AG04449 (cell line): ENCODE measurements at regions of chr19 and their contacts with region 1.

Region 1: GRCh38 chr19:6862673-6863078 is 24.7 kb upstream of the ADGRE1 start:
- DNase-seq: peak; percentile 9
- H3K4me3 ChIP-seq: peak overlapping the region; percentile 40
- CTCF ChIP-seq: peak; percentile 86

Region 2: GRCh38 chr19:6516659-6517291 is 345.9 kb before region 1 on chr19:
- CTCF ChIA-PET with region 1: interaction called, 24 read pairs
- POLR2A ChIA-PET with region 1: no interaction called
- DNase-seq: peak; percentile 3
- H3K4me3 ChIP-seq: peak overlapping the region; percentile 73
- CTCF ChIP-seq: peak; percentile 98

Region 3: DNA sequence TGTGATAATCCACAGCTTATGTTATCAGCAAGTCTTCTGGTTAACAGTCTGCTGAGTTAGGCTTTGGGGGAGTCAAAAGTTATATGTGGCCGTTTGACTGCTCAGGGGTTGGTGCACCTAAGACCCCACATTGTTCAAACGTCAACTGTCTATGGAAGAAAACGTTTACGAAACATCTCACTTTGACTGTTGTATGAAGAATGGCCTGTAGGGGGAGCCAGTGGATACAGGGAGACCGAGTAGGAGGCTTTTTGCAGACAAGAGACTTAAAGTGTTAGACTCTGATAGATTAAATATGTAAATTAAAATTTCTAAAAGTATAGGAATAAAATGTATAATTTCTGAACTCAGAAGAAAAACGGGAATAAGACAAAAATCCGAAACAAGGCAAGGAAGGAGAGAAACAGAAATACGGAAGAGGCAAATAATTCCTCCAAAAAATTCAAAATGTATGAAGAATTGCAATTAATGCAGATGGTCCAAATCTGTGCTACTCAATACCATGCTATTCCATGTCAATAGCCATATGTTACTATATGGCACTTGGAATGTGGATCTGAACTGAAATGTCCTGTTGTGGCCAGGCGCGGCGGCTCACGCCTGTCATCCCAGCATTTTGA is 230.6 kb before region 1 on chr19:
- CTCF ChIA-PET with region 1: interaction called, 10 read pairs
- POLR2A ChIA-PET with region 1: no interaction called
- DNase-seq: no peak
- H3K4me3 ChIP-seq: no peak overlapping the region
- CTCF ChIP-seq: peak; percentile 77

Region 4: DNA sequence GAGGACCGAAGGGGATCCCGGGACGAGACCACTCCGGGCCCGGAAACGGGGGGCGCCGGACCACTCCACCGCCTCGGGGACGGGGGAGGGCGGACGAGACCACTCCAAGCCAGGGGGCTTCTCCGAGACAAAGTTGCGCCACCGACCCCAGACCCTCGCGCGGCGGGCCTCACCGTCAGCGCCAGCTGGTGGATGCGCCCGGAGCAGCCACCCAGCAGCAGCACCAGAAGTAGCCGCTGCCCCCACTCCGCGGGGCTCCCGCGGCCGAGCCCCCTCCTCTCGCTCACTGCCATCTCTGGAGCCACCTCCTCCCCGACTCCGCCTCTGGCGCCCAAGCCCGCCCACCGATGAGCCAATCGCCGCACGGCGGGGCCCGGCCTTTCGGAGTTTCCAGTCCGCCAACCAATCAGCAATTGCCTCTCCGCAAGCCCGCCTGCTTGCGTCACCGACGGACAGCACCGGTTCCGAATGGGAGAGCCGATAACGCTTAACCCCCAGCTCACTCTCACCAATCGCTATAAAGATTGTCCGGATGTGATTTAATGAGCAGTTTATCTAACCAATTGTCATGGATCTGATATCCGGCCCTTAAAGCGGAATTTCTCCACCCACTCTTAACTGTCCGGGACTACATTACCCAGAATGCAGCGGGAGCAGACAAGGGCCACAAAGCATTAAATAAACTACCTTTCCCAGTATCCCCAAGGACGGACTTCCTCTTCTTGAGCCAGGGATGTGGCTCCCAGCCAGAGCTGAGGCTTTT is 125.2 kb before region 1 on chr19 and contains the start of gene GPR108:
- CTCF ChIA-PET with region 1: interaction called, 131 read pairs
- POLR2A ChIA-PET with region 1: interaction called, 11 read pairs
- DNase-seq: peak; percentile 100
- H3K4me3 ChIP-seq: peak within 1 kb of the TSS; percentile 76
- CTCF ChIP-seq: no peak

Region 5: DNA sequence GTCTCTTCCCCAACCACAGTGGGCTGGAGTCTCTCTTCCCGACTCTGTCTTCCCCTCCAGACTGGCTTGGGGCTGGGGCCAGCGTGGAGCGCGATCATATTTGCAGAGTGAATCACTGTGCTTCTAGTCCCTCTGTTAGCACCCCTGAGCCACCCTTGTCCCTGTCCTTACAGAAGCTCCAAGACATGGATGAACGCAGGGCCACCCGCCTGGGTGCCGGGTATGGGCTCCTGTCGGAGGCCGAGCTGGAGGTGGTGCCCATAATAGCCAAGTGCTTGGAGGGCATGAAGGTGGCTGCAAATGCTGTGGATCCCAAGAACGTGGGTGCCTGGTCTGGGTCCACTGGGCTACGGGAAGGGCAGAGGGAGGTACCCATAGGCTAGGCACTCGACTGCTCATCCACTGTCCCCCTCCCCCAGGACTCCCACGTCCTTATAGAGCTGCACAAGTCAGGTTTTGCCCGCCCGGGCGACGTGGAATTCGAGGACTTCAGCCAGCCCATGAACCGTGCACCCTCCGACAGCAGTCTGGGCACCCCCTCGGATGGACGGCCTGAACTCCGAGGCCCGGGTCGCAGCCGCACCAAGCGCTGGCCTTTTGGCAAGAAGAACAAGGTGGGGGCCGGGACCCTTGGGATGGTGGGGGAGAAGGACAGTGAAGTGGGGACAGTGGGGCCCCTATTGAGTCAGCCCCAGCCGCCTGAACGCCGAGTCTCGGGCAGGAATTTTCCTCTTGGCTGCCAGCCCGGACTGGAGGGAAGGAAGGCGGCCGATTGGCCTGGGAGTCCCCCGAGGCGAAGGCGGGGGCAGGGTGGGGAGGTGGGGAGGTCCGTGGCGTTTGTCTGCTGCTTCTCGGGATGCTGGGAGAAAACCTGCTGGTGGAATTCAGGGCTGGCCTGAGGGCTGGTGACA is 118.0 kb before region 1 on chr19:
- CTCF ChIA-PET with region 1: interaction called, 22 read pairs
- POLR2A ChIA-PET with region 1: no interaction called
- DNase-seq: no peak
- H3K4me3 ChIP-seq: no peak overlapping the region
- CTCF ChIP-seq: no peak

Region 6: GRCh38 chr19:6849876-6850275 is 12.8 kb before region 1 on chr19:
- CTCF ChIA-PET with region 1: interaction called, 13 read pairs
- POLR2A ChIA-PET with region 1: no interaction called
- DNase-seq: no peak
- H3K4me3 ChIP-seq: no peak overlapping the region
- CTCF ChIP-seq: no peak

Region 7: DNA sequence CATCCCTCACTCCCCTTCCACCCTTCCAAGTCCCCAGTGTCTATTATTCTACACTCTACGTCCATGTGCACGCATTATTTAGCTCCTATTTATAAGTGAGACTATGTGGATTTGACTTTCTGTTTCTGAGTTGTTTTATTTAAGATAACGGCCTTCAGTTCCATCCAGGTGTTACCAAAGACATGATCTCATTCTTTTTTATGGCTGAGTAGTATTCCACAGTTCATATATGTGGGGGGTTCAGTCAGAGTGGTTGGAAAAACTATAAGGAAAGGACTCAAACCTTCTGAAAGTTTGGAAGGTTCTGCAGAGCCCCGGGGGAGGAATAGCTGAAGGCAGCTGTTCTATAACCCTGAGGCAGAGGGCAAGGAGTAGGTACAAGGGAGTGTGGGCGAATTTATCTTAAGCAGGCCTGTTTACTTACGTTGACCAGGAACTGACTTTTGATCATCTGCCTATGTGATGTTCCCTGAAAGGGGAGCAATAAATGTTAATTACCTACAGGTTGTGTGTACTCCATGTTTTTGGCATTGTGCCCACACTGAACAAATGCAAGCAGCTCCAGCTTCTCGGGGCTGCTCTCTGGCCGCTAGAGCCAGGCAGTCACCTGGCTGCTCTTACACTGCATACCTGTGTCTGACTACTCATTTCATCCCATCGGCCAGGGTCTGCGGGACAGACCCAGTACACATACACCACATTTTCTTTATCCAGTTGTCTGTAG is 11.2 kb after region 1 on chr19:
- CTCF ChIA-PET with region 1: interaction called, 12 read pairs
- POLR2A ChIA-PET with region 1: no interaction called
- DNase-seq: no peak
- H3K4me3 ChIP-seq: no peak overlapping the region
- CTCF ChIP-seq: no peak